Activated T-helper 1 cell treated with anti-CD3 and anti-CD28 coated beads, Interleukin-12 subunit alpha, Interleukin-12 subunit beta, Interleukin-2, Interleukin-4 antibody, amounts not matched to agents 30 ng/mL and 10 ng/mL and 1 ng/mL, durations not matched to agents 14 hours and 24 hours and 36 hours (primary cell): ENCODE measurements at regions of chr5 and their contacts with region 1.

Region 1: DNA sequence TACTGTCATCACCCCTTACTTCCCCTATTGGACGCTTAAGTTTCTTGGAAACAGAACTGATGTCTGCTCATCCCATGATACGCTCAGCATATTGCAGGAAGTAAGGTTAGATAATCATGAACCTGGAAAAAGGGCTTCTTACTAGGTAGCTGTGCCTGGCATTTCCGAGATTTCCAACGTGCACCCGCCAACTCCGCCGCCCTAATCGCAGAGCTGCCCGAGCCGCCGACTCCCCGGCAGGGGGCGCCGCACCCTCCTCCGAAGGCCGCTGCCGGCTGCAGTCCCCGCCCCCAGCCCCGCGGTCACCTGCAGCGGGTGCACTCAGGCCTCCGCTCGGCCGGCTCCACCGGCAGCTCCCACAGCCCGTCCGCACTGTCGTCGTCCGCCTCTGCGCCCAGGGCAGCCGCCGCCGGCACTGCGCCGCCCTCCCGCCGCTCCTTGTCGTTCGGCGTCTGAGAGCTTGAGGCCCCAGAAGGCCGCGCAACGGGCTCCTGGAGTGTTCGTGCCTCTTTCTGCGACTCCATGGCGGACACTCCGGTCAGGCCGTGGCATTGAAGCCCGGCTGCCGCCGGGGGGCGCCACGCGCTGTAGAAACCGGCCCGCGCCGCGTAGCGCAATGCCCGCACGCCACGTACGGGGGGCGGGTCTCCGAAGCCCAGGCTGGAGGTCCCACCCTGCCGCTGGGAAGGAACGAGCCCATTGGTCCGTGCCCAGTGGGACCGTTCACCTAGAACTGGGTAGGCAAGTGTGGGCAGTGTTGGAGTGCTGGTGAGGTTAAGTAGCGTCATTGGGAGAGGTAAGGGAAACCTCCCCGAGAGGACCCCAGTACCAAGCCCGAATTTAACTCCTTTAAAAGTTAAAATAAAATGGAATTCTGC is at the start of gene DTWD2:
- DNase-seq: peak; percentile 90
- H3K4me3 Mint-ChIP-seq: peak within 1 kb of the TSS; percentile 78
- H3K27ac Mint-ChIP-seq: peak within 1 kb of the TSS; percentile 32
- H3K4me1 Mint-ChIP-seq: peaks cover 12% of the 10 kb centered on the region
- H3K27me3 Mint-ChIP-seq: no peaks in the 10 kb centered on the region
- total RNA-seq, gene DTWD2: 1.6 and 1.9 TPM in 2 replicates

Region 2: DNA sequence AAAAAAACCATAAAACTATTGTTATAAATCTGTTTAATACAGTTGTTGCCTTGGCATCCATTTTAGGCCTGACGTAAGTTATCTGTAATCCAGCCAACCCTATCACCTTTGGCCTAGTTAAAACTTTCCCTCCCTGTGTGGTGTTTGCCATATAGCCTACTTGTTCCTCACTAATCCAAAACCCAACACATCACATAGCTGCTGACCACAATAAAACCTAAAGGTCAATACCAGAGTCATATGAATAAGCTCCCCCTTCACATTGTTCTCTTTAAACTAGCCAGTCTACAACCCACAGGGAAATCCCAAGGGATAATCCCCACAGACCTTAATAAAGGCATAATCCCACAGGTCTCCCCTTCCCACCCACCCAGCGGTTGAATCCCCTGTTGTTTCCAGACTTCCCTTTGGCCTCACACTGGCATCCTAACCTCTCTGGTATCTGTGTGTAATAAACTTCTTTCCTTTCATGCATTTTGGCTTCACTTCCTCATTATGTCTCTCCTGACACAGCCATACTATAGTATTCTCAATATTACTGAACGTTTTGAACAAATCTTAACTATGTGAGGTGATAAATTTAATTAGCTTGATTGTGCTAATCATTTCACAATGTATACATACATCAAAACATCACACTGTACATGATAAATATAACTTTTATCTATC is 50.7 kb before region 1 on chr5:
- intact Hi-C with region 1: no loop called
- DNase-seq: no peak
- H3K4me3 Mint-ChIP-seq: no peak overlapping the region
- H3K27ac Mint-ChIP-seq: no peak overlapping the region
- H3K4me1 Mint-ChIP-seq: no peaks in the 10 kb centered on the region
- H3K27me3 Mint-ChIP-seq: no peaks in the 10 kb centered on the region

Region 3: DNA sequence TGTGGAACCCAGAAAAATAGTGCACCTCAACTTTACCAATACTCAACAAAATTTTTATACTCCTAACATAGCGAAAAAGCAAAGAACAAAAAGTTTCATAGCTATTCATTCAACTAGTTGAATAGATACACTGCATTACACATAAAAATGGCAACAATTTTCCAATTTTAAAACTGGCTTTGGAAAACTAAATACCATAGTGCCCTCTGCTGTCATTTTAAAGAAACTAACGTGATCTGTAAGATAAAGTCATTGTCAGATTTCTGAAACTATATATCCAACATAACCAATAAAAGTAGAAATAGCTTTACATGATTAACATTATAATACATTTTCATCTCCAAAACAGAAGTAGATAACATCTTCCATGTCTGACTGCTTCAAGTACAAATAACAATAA is 31.5 kb before region 1 on chr5:
- intact Hi-C with region 1: no loop called
- DNase-seq: no peak
- H3K4me3 Mint-ChIP-seq: no peak overlapping the region
- H3K27ac Mint-ChIP-seq: no peak overlapping the region
- H3K4me1 Mint-ChIP-seq: no peaks in the 10 kb centered on the region
- H3K27me3 Mint-ChIP-seq: no peaks in the 10 kb centered on the region

Region 4: GRCh38 chr5:119016125-119016774 is 28.0 kb after region 1 on chr5:
- intact Hi-C with region 1: no loop called
- DNase-seq: no peak
- H3K4me3 Mint-ChIP-seq: no peak overlapping the region
- H3K27ac Mint-ChIP-seq: no peak overlapping the region
- H3K4me1 Mint-ChIP-seq: no peaks in the 10 kb centered on the region
- H3K27me3 Mint-ChIP-seq: peaks cover 7% of the 10 kb centered on the region

Region 5: DNA sequence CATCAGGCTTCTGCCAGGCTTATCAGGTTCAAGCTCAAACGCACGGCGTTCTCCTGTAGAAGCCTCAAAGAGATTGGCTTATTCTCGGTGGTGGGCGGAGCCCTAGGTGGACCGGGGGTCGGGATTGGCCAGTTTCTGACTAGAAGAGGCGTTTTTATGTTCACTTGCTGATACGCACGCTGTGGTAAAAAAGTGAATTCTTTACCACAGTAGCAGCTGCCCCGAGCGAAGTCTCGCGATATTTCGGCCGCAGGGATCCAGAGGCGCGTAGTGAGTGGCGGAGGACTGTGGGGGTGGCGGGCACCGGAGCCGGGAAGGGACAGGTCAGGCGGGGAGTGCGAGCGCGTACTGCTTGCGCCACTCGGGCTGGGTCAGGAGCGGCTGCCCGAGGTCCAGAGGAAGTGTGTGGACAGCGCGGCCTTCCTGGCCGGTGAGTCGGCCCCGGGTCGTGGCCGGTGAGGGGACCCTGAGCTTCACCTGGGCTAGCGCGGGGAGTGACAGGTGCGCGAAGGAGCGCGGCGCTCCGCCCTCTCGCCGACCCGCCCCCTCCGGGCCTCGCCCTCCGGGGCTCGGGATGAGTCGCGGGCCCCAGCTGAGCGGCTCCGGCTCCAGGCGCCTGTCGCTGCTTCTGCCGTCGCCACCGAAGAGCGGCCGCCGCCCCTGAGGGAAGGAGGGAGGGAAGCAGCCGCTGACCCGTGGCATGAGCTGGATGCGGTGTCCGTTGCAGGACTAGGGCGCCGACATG is 82.8 kb after region 1 on chr5 and contains the start of gene DMXL1:
- intact Hi-C with region 1: loop called (anchors 1 kb)
- DNase-seq: peak; percentile 96
- H3K4me3 Mint-ChIP-seq: peak within 1 kb of the TSS; percentile 94
- H3K27ac Mint-ChIP-seq: peak within 1 kb of the TSS; percentile 98
- H3K4me1 Mint-ChIP-seq: peaks cover 36% of the 10 kb centered on the region
- H3K27me3 Mint-ChIP-seq: no peaks in the 10 kb centered on the region
- total RNA-seq, gene DMXL1: 26.7 and 28.2 TPM in 2 replicates

Region 6: GRCh38 chr5:119267958-119268386 is 279.7 kb after region 1 on chr5:
- intact Hi-C with region 1: loop called (anchors 1 kb)
- DNase-seq: peak; percentile 72
- H3K4me3 Mint-ChIP-seq: peak overlapping the region; percentile 99
- H3K27ac Mint-ChIP-seq: peak overlapping the region; percentile 97
- H3K4me1 Mint-ChIP-seq: peaks cover 55% of the 10 kb centered on the region
- H3K27me3 Mint-ChIP-seq: no peaks in the 10 kb centered on the region

Region 7: GRCh38 chr5:119340597-119341218 is 352.5 kb after region 1 on chr5:
- intact Hi-C with region 1: loop called (anchors 5 kb)
- DNase-seq: peak; percentile 63
- H3K4me3 Mint-ChIP-seq: peak overlapping the region; percentile 83
- H3K27ac Mint-ChIP-seq: peak overlapping the region; percentile 100
- H3K4me1 Mint-ChIP-seq: peaks cover 95% of the 10 kb centered on the region
- H3K27me3 Mint-ChIP-seq: no peaks in the 10 kb centered on the region

Region 8: DNA sequence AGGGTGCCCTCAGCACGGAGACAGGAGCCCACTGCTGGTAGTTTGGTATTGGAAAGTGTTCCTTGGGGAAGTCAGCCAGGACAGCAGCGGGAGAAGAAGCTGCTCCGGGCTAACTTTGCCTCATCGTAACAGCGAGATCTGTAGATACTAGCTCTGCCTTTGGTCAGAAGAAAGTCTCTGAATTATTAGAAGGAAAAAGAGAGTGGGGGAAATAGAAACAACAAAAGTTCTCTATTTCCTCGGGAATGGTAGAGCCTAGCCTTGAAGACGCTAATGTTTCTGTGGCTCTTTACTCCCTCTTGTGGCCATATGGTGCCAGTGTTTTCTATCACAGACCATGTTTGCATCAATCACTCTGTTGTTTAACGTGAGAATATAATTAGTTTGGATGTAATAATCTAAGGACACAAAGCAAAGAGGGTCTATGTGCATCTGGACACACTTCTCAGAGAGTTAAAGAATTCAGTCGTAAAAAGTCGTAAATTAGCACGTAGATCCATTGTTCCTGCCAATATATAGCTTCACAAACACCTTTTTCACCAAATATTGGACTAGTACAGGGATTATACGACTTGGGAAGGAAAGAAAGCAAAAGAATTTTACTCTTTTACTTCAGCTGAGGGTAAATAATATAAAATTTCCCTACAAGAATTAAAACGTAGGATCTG is 423.8 kb after region 1 on chr5:
- intact Hi-C with region 1: loop called (anchors 1 kb)
- DNase-seq: peak; percentile 36
- H3K4me3 Mint-ChIP-seq: peak overlapping the region; percentile 84
- H3K27ac Mint-ChIP-seq: peak overlapping the region; percentile 38
- H3K4me1 Mint-ChIP-seq: peaks cover 35% of the 10 kb centered on the region
- H3K27me3 Mint-ChIP-seq: peaks cover 4% of the 10 kb centered on the region

Region 9: DNA sequence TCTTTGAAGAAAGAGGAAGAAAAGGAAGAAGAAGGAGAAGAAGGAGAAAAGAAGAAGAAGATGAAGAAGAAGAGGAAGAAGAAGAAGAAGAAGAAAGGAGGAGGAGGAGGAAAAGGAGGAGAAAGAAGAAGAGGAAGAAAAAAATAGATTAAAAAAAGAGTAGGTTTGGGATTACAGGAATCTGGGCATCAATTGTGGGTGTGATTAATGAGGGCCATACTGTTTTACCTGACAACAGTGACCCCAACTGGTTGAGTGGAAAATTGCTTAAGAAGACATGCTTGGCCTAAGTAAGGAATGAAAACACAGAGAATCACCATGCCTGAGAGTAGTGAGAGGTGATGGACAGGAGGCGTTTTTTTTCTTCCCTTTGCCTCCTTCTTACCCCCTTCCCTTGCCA is 755.7 kb after region 1 on chr5:
- intact Hi-C with region 1: loop called (anchors 1 kb)
- DNase-seq: no peak
- H3K4me3 Mint-ChIP-seq: no peak overlapping the region
- H3K27ac Mint-ChIP-seq: no peak overlapping the region
- H3K4me1 Mint-ChIP-seq: no peaks in the 10 kb centered on the region
- H3K27me3 Mint-ChIP-seq: no peaks in the 10 kb centered on the region